ENCODE measurements at regions of chr4 and their contacts with region 1.

Region 1: GRCh38 chr4:10018818-10019461 is 2.4 kb downstream of the SLC2A9 start:
- DNase-seq: peak; percentile 96
- H3K4me3 ChIP-seq: peak overlapping the region; percentile 44
- H3K27ac ChIP-seq: peak overlapping the region; percentile 87
- H3K4me1 ChIP-seq: peaks cover 4% of the 10 kb centered on the region
- H3K27me3 ChIP-seq: no peaks in the 10 kb centered on the region
- CTCF ChIP-seq: peak; percentile 96

Region 2: DNA sequence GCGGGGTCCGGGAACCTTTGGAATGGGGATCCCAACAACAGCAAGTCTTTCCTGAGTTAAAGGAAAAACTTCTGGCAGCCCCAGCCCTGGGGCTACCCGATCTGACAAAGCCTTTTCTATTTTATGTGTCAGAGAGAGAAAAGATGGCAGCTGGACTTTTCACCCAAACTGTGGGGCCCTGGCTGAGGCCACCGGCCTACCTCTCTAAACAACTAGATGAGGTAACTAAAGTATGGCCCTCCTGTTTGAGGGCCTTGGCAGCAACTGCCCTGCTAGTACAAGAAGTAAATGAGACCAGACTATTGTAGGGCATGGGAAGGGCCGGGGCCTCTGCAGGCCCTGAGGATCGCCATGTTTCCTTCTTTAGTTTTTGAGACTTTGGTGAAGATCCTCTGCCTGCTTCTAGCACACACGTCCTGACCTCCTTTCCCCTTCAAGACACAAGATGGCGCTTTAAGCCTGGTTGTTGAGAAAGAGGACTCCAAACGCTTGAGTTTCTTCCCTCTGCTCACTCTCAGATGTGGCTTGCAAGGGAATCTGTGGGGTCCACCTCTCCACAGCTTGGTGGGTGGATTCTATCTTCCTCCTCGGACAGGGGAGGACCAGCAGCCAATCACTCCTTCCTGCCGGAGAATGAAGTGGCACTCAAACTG is 256.0 kb before region 1 on chr4:
- intact Hi-C with region 1: loop called (anchors 2 kb)
- DNase-seq: peak; percentile 73
- H3K4me3 ChIP-seq: no peak overlapping the region
- H3K27ac ChIP-seq: no peak overlapping the region
- H3K4me1 ChIP-seq: no peaks in the 10 kb centered on the region
- H3K27me3 ChIP-seq: no peaks in the 10 kb centered on the region
- CTCF ChIP-seq: peak; percentile 60

Region 3: DNA sequence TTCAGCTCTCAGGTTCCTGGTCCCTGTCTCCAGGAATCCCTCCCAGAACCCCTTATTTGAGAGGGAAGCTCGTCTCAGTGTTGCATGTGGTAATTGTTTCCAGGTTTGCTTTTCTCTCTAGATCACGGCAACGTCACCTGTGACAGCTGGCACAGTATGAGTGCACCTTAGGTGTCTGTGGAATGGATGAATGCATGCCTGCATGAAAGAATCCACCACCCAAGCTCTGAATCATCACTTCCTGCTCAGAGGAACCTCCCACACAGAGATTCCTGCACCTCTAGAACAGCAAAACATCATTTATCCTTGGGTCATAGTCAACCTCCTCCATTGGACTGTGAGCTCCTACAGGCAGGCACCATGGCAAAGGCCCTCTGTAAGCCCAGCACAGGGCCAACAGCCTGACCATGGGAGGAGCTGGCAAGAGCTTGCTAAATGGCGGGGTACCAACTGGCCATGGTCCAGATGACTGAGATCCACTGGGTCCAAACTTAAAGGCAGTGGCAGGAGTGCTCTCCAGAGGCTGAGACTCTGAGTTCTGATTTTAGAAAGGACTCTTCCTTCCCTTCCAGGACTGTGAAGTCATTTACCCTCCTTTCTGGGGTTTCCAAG is 113.9 kb before region 1 on chr4:
- intact Hi-C with region 1: loop called (anchors 10 kb)
- DNase-seq: no peak
- H3K4me3 ChIP-seq: no peak overlapping the region
- H3K27ac ChIP-seq: no peak overlapping the region
- H3K4me1 ChIP-seq: no peaks in the 10 kb centered on the region
- H3K27me3 ChIP-seq: no peaks in the 10 kb centered on the region
- CTCF ChIP-seq: no peak